ENCODE measurements at regions of chr19 and their contacts with region 1.

Region 1: DNA sequence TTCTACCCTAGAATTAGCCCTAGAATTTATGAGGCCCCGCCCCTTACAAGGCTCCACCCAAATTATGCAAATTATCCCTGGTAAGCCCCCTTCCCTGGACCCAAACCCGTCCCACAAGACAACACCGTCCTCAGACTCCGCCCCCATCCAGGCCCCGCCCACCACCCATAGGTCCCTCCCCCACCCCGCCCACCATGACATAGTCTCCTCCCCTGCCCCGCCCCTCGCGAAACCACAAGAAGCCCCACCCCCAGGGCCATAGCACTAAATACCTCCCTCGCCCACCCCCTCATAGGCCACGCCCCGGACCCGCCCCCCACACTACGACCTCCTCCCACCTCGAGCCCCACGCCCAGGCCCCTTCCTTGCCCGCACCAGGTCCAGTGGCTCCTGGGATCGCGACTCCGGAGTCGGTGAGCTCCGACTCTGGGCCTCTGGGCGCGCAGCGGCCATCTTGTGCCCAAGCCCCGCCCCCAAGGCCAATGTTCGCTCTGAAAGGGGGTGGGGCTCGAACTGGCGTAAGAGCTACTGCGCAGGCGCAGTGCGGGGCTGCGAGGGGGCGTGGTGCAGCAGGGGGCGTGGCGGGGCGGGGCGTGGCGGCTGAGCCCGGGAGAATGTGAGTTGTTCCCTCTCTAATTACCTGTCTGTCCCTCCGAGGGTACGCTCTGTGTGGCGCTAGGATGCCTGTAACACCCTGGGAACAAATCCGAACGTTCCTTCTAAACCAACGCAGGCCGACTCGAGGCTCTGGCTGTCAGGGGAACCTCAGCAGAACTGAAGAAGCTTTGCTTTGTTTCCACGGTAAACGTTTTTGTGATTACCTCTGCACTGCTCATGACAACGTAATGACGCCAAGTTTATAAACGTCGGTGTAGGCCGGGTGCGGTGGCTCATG is at the start of gene ZNF784:
- DNase-seq: peak; percentile 94
- H3K4me3 Mint-ChIP-seq: peak within 1 kb of the TSS; percentile 78
- H3K27ac Mint-ChIP-seq: peak within 1 kb of the TSS; percentile 93
- H3K4me1 Mint-ChIP-seq: peaks cover 50% of the 10 kb centered on the region
- H3K27me3 Mint-ChIP-seq: peaks cover 7% of the 10 kb centered on the region
- total RNA-seq, gene ZNF784: 6.4 to 7.4 TPM

Region 2: GRCh38 chr19:55516878-55517620 is 107.3 kb before region 1 on chr19:
- CTCF ChIA-PET with region 1: interaction called, 30 read pairs
- POLR2A ChIA-PET with region 1: no interaction called
- DNase-seq: peak; percentile 90
- H3K4me3 Mint-ChIP-seq: peak overlapping the region; percentile 57
- H3K27ac Mint-ChIP-seq: peak overlapping the region; percentile 59
- H3K4me1 Mint-ChIP-seq: peaks cover 5% of the 10 kb centered on the region
- H3K27me3 Mint-ChIP-seq: peaks cover 9% of the 10 kb centered on the region

Region 3: DNA sequence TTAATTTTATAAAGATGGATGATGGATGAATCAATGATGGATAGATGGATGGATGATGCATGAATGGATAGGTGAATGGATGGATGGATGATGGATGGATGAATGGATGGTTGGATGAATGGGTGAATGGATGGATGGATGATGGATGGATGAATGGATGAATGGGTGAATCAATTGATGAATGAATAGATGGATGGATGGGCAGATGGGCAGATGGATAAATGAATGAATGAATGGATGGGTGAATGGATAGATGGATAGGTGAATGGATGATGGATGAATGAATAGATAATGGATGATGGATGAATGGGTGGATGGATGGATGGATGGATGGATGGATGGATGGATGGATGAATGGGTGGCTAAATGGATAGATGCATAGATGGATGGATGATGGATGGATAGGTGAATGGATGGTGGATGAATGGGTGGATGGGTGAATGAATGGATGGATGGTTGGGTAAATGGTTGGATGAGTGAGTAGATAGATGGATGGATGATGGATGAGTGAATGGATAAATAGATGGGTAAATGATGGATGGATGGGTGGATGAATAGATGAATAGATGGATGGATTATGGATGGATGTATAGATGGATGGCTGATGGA is 56.5 kb before region 1 on chr19:
- CTCF ChIA-PET with region 1: no interaction called
- POLR2A ChIA-PET with region 1: no interaction called
- DNase-seq: no peak
- H3K4me3 Mint-ChIP-seq: no peak overlapping the region
- H3K27ac Mint-ChIP-seq: no peak overlapping the region
- H3K4me1 Mint-ChIP-seq: no peaks in the 10 kb centered on the region
- H3K27me3 Mint-ChIP-seq: no peaks in the 10 kb centered on the region

Region 4: GRCh38 chr19:55643348-55644176 is 19.2 kb after region 1 on chr19 and contains the start of gene ZNF581:
- CTCF ChIA-PET with region 1: interaction called, 11 read pairs
- POLR2A ChIA-PET with region 1: interaction called, 4 read pairs
- DNase-seq: peak; percentile 78
- H3K4me3 Mint-ChIP-seq: peak within 1 kb of the TSS; percentile 86
- H3K27ac Mint-ChIP-seq: peak within 1 kb of the TSS; percentile 94
- H3K4me1 Mint-ChIP-seq: peaks cover 54% of the 10 kb centered on the region
- H3K27me3 Mint-ChIP-seq: no peaks in the 10 kb centered on the region
- total RNA-seq, gene ZNF581: 26.6 to 30.1 TPM

Region 5: GRCh38 chr19:55795021-55795420 is 170.7 kb after region 1 on chr19:
- CTCF ChIA-PET with region 1: no interaction called
- POLR2A ChIA-PET with region 1: no interaction called
- DNase-seq: no peak
- H3K4me3 Mint-ChIP-seq: no peak overlapping the region
- H3K27ac Mint-ChIP-seq: no peak overlapping the region
- H3K4me1 Mint-ChIP-seq: no peaks in the 10 kb centered on the region
- H3K27me3 Mint-ChIP-seq: no peaks in the 10 kb centered on the region